GM12878 (cell line): ENCODE measurements at regions of chr5 and their contacts with region 1.

Region 1: DNA sequence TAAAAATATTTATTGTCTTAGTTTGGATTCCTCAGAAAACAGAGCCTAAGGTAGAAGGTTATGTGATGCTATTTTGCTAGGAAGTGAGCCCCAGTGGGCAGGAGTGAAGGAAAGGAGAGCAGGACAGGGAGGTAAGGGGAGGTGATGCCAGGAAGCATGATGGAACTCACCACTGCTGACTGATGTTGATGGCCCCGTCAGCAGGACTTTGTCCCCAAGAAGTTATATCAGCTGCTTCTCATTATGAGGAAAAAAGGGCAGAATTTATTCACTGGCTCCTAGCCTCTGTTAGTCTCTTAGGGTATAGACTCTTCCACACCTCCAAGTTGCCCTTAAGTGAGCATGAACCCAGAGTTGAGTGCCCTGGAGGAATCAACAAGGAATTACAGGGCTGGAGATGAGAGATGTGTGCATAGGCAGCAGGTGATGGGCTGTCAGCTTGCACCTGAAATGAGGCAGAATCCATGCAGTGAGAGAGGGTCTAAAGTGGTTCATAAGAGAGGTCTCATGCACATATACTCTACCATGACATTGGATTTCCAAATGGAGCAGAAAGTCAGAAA is 120.6 kb upstream of the NIPBL start:
- DNase-seq: no peak
- ATAC-seq: 0 out of 3 replicates have a peak, but pooled peaks have one; percentile 19
- H3K4me3 ChIP-seq: no peak overlapping the region
- H3K27ac ChIP-seq: no peak overlapping the region
- H3K4me1 ChIP-seq: no peaks in the 10 kb centered on the region
- H3K27me3 ChIP-seq: no peaks in the 10 kb centered on the region
- CTCF ChIP-seq: no peak
- EP300 ChIP-seq: no peak
- POLR2A ChIP-seq: no peak
- RAD21 ChIP-seq: no peak

Region 2: DNA sequence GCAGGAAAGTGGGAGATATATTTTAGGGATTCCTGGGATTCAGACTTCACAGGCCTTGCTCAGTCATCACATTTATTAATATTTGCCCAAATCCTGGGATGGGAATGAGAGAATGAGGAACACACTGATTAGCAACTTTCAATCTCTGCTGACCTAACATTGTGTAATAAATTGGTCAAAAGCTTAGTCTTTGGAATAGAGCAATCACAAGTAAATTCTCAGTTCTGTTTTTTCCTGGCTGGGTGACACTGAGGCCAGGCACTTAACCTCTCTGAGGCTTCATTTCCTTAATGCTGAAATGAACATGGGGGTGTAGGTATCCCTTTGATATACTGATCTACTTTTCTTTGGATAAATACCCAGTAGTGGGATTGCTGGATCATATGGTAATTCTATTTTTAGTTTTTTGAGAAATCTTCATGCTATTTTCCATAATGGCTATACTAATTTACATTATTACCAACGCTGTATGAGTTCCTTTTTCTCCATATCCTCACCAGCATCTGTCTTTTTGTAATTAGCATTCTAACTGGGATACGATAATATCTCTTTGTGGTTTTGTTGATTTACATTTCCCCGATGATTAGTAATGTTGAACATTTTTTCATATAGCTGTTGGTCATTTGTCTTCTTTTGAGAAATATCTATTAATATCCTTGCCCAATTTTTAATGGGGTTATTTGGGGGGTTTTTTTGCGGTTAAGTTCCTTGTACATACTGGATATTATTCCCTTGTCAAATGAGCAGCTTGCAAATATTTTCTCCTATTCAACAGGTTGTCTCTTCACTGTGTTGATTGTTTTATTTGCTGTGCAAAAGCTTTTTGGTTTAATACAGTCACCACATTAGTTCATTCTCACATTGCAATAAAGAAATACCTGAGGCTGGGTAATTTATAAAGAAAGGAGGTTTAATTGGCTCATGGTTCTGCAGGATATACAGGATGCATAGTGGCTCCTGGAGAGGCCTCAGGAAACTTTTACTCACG is 83.8 kb after region 1 on chr5:
- CTCF ChIA-PET with region 1: no interaction called
- POLR2A ChIA-PET with region 1: no interaction called
- RAD21 ChIA-PET with region 1: no interaction called
- SMC1A ChIA-PET with region 1: no interaction called
- in situ Hi-C with region 1: no loop called
- intact Hi-C with region 1: loop called (anchors 5 kb)
- DNase-seq: no peak
- ATAC-seq: no peak
- H3K4me3 ChIP-seq: no peak overlapping the region
- H3K27ac ChIP-seq: no peak overlapping the region
- H3K4me1 ChIP-seq: no peaks in the 10 kb centered on the region
- H3K27me3 ChIP-seq: no peaks in the 10 kb centered on the region; a peak in 1 of 4 replicates
- CTCF ChIP-seq: no peak
- EP300 ChIP-seq: no peak
- POLR2A ChIP-seq: no peak
- RAD21 ChIP-seq: no peak